ENCODE measurements at regions of chr17 and their contacts with region 1.

Region 1: GRCh38 chr17:57114085-57114673 is 29.1 kb downstream of the AKAP1 start:
- DNase-seq: peak in 1 of 2 donors; percentile 88
- ATAC-seq: peak; percentile 59
- H3K4me3 ChIP-seq: no peak overlapping the region
- H3K27ac ChIP-seq: no peak overlapping the region
- H3K4me1 ChIP-seq: no peaks in the 10 kb centered on the region
- H3K27me3 ChIP-seq: no peaks in the 10 kb centered on the region

Region 2: DNA sequence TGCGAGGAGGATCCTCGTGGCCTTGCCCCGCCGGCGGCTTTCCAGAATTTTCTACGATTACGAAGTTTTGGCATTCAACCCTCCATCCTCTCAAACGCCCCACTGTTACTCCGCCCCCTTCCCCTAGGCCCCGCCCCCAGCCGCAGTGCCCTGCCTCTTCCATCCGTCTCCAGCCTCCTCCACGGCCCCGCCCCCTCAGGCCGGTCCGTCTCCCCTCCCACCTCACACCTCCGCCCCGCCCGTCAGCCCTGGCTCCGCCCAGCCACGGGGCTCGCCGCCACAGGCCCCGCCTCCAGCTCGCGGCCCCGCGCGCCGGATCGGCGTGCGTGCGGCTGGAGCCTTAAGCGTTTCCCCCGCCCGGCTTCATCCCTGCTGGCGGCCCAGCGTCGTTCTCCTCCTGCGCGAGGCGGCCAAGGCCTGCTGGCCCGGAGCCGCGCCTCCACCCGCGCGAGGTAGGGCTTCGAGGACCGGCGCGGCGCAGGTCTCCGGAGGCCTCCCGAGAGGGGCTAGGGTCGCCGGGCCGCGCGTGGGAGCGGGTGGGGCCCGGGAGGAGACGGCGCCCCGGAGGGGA is 280.3 kb before region 1 on chr17 and contains the starts of genes C17orf67 and DGKE:
- intact Hi-C with region 1: loop called in 1 of 2 experiments (anchors 10 kb)
- DNase-seq: peak; percentile 99 to 100
- ATAC-seq: peak; percentile 98
- H3K4me3 ChIP-seq: peak within 1 kb of the TSS; percentile 65 to 73
- H3K27ac ChIP-seq: peak within 1 kb of the TSS in 1 of 2 donors; percentile 1
- H3K4me1 ChIP-seq: no peaks in the 10 kb centered on the region
- H3K27me3 ChIP-seq: no peaks in the 10 kb centered on the region
- total RNA-seq, gene C17orf67: 3.3 to 5.0 TPM
- total RNA-seq, gene DGKE: 9.9 to 17.1 TPM

Region 3: DNA sequence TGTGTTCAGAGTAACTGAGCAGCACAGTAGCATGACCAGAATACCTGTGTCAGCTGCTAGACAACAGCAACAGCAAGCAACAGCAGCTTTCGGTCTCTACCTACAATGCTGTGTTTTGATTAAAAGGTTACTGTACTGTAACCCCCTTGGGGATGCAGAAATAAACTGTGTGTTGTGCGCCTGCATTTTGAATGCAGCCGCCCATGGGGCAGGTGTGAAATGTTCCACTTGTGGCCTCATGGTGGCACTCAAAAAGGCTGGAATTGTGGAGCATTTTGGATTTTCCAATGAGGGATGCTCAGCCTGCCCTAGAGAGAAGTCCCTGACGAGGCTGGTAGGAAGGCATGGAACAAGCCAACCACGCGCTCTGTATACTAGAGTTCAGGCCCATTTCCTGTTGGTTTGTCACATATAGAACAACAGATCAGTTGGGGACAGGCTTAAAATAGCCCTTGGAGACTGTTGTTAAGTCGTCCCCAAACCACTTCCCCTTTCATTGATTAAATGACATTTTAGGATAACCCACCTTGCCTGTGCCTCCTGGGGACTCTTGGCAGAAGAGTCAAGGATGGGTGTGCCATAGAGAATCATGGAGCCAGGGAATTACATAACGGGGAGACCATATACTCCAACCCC is 109.1 kb before region 1 on chr17:
- intact Hi-C with region 1: loop called (anchors 2 kb)
- DNase-seq: no peak
- ATAC-seq: peak; percentile 50
- H3K4me3 ChIP-seq: no peak overlapping the region
- H3K27ac ChIP-seq: no peak overlapping the region
- H3K4me1 ChIP-seq: no peaks in the 10 kb centered on the region
- H3K27me3 ChIP-seq: no peaks in the 10 kb centered on the region

Region 4: GRCh38 chr17:57035971-57036481 is 78.2 kb before region 1 on chr17:
- intact Hi-C with region 1: no loop called
- DNase-seq: no peak
- ATAC-seq: no peak
- H3K4me3 ChIP-seq: no peak overlapping the region
- H3K27ac ChIP-seq: peak overlapping the region in 1 of 2 donors; percentile 10
- H3K4me1 ChIP-seq: peaks cover 3 to 5% of the 10 kb centered on the region in 2 donors
- H3K27me3 ChIP-seq: no peaks in the 10 kb centered on the region

Region 5: DNA sequence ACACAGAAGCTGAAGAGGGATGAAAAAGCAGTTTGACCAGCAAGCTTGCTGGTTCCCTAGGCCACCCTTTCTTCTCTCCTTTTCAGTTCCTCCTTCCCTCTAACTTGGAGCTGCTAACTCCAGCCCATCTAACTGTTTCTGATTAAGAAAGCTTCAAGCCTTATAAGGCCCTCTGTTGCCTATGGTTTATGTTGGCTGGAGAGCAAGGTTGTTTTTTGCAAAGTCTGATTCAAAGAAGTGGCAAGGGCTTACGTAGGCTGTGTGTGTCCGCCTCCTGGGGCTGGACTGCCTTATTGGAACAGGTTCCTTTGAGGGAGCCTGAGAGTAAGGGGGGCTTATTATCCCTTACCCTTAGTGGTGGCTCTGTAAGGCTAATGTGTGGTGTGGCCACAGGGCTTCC is 22.0 kb before region 1 on chr17:
- intact Hi-C with region 1: loop called in 1 of 2 experiments (anchors 2 kb)
- DNase-seq: peak; percentile 72 to 84
- ATAC-seq: peak; percentile 85
- H3K4me3 ChIP-seq: peak overlapping the region in 1 of 2 donors; percentile 12
- H3K27ac ChIP-seq: peak overlapping the region; percentile 99
- H3K4me1 ChIP-seq: peaks cover 10 to 23% of the 10 kb centered on the region in 2 donors
- H3K27me3 ChIP-seq: no peaks in the 10 kb centered on the region

Measured in aorta (tissue), 5 donors.